Thyroid gland (tissue), 4 donors: ENCODE measurements at regions of chr9 and their contacts with region 1.

Region 1: GRCh38 chr9:121861501-121862180 is 210.2 kb downstream of the DAB2IP start:
- DNase-seq: peak; percentile 48 to 50
- H3K4me3 ChIP-seq: no peak overlapping the region
- H3K27ac ChIP-seq: no peak overlapping the region
- H3K4me1 ChIP-seq: peaks cover 3 to 13% of the 10 kb centered on the region in 2 donors
- H3K27me3 ChIP-seq: no peaks in the 10 kb centered on the region
- CTCF ChIP-seq: peak in 5 of 6 experiments; percentile 10 to 41 (median 27)
- POLR2A ChIP-seq: no peak

Region 2: DNA sequence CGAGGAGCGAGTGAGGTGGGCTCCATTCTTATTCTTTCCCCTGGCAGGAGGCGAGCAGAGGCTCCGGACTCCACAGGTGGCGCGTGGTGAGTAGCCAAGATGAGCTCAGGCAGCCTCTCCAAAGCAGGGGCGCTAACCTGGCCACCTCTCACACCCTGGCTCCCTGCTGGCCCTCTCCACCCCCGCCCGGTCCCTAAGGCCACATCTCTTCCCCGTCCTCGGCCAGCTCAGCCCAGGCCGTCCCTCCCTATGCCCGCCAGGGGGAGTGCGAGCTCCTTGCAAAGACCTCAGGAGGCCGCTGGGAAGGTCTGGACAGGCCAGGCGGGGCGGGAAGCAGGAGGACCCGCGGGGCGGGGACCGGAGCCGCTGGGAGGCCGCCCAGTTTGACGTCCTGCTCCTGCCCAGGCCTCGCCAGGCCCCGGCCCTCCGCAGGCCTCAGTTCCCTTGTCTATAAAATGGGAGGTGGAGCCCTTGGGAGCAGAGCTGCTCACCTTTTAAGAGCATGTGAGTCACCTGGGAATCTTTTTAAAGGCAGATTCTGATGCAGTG is 315.7 kb before region 1 on chr9:
- intact Hi-C with region 1: loop called (anchors 10 kb)
- DNase-seq: peak; percentile 98 to 99
- H3K4me3 ChIP-seq: peak overlapping the region in 1 of 3 donors; percentile 17
- H3K27ac ChIP-seq: no peak overlapping the region
- H3K4me1 ChIP-seq: peaks cover 0 to 18% of the 10 kb centered on the region in 2 donors
- H3K27me3 ChIP-seq: no peaks in the 10 kb centered on the region
- CTCF ChIP-seq: peak; percentile 81 to 99 (median 92)
- POLR2A ChIP-seq: peak in 1 of 2 donors; percentile 27